Activated CD4-positive, alpha-beta T cell treated with anti-CD3 and anti-CD28 coated beads, Interleukin-2, amount 10 ng/mL, durations not matched to agents 24 days and 14 days (primary cell): ENCODE measurements at regions of chr17 and their contacts with region 1.

Region 1: GRCh38 chr17:59846394-59847165 is 46.2 kb downstream of the TUBD1 start:
- DNase-seq: peak; percentile 86
- H3K4me3 Mint-ChIP-seq: peak overlapping the region; percentile 47
- H3K27ac Mint-ChIP-seq: peak overlapping the region; percentile 92
- H3K4me1 Mint-ChIP-seq: peaks cover 53% of the 10 kb centered on the region
- H3K27me3 Mint-ChIP-seq: no peaks in the 10 kb centered on the region

Region 2: GRCh38 chr17:59707114-59707970 is 139.2 kb before region 1 on chr17 and contains the starts of genes PTRH2 and VMP1:
- intact Hi-C with region 1: loop called (anchors 2 kb)
- DNase-seq: peak; percentile 98
- H3K4me3 Mint-ChIP-seq: peak within 1 kb of the TSS; percentile 91
- H3K27ac Mint-ChIP-seq: peak within 1 kb of the TSS; percentile 87
- H3K4me1 Mint-ChIP-seq: peaks cover 43% of the 10 kb centered on the region
- H3K27me3 Mint-ChIP-seq: no peaks in the 10 kb centered on the region
- total RNA-seq, gene PTRH2: 49.0 and 50.3 TPM in 2 replicates
- total RNA-seq, gene VMP1: 417 and 422 TPM in 2 replicates

Region 3: GRCh38 chr17:59829217-59830006 is 17.2 kb before region 1 on chr17:
- intact Hi-C with region 1: loop called (anchors 2 kb)
- DNase-seq: peak; percentile 89
- H3K4me3 Mint-ChIP-seq: peak overlapping the region; percentile 86
- H3K27ac Mint-ChIP-seq: peak overlapping the region; percentile 97
- H3K4me1 Mint-ChIP-seq: peaks cover 72% of the 10 kb centered on the region
- H3K27me3 Mint-ChIP-seq: no peaks in the 10 kb centered on the region

Region 4: DNA sequence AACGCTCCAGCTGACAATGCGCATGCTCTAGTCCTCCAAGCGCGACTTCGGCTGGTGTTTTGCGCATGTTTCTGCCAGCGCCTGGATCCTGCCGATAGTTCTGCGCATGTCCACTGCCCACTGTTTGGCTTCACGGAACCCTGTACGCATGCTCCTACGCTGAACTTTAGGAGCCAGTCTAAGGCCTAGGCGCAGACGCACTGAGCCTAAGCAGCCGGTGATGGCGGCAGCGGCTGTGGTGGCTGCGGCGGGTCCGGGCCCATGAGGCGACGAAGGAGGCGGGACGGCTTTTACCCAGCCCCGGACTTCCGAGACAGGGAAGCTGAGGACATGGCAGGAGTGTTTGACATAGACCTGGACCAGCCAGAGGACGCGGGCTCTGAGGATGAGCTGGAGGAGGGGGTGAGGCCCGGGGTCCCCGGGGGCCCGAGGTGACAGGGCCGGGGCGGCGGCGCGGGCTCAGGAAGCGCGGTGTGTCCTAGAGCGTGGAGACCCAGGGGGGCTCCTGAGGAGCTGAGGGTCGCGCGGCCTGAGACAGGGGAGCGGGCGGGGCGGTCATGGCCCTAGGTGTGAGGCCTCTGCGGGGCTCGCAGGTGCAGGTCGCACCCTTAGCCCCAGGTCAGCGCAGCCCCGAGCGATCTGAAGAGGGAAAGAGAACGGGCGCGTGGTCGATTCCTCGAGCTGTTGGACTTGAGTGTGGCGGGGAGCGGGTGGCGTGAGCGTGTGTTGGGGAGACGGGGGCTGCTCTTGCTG is 46.5 kb after region 1 on chr17 and contains the starts of genes RPS6KB1 and TUBD1:
- intact Hi-C with region 1: loop called (anchors 10 kb)
- DNase-seq: peak; percentile 99
- H3K4me3 Mint-ChIP-seq: peak within 1 kb of the TSS; percentile 100
- H3K27ac Mint-ChIP-seq: peak within 1 kb of the TSS; percentile 100
- H3K4me1 Mint-ChIP-seq: peaks cover 40% of the 10 kb centered on the region
- H3K27me3 Mint-ChIP-seq: peaks cover 3% of the 10 kb centered on the region
- total RNA-seq, gene RPS6KB1: 64.0 and 66.4 TPM in 2 replicates
- total RNA-seq, gene TUBD1: 11.0 and 12.1 TPM in 2 replicates